Activated T-helper 1 cell treated with anti-CD3 and anti-CD28 coated beads, Interleukin-12 subunit alpha, Interleukin-12 subunit beta, Interleukin-2, Interleukin-4 antibody, amounts not matched to agents 30 ng/mL and 10 ng/mL and 1 ng/mL, durations not matched to agents 14 hours and 24 hours and 36 hours (primary cell): ENCODE measurements at regions of chr3 and their contacts with region 1.

Region 1: DNA sequence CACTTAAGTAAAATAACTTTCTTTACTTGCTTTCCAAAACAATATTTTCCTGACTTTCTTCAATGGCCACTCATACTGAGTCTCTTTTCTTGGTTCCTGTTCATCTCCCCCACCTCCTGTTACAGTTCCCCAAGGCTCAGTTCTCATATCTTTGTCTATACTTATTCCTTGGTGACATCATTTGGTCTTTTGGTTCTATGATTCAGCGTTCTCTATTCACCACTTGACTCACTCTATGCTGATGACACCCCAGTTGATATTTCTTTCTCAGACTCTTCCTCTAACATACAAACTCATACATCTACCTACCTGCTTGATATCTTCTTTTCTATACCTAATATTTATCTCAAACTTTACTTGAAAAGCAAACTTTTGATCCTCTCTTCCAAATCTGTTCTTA is 85.0 kb upstream of the P3H2 start:
- DNase-seq: no peak
- H3K4me3 Mint-ChIP-seq: no peak overlapping the region
- H3K27ac Mint-ChIP-seq: no peak overlapping the region
- H3K4me1 Mint-ChIP-seq: peaks cover 9% of the 10 kb centered on the region
- H3K27me3 Mint-ChIP-seq: peaks cover 6% of the 10 kb centered on the region

Region 2: DNA sequence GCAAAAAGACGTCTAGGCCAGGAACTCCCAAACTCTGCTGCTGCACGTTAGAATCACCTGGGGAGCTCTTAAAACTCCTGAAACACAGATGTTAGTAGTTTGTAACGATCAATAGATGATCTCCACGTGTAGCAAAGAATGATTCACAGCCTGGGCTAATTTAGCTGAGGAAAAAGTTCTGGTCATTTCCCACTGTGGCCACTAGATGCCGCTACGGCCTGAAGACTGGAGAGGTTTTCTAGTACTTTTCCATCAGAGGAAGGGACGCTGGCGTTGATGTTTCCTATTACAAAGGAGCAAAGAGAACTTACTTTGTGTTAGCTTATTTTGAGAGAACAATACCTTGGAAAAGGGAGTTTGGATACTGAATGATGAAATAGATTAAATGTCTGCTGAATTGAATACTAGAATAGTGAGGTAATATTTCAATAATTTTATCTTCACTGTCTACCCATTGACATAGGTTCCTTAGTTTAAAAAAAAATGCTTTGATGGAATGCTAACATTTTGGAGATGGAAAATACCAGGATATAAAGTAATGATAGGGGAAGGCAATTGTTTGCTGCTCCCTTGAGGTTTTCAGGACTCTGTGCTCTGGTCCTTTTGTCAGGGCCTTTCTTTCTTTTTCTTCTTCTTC is 244.1 kb before region 1 on chr3:
- intact Hi-C with region 1: loop called (anchors 1 kb)
- DNase-seq: peak; percentile 49
- H3K4me3 Mint-ChIP-seq: no peak overlapping the region
- H3K27ac Mint-ChIP-seq: no peak overlapping the region
- H3K4me1 Mint-ChIP-seq: peaks cover 7% of the 10 kb centered on the region
- H3K27me3 Mint-ChIP-seq: peaks cover 2% of the 10 kb centered on the region

Region 3: GRCh38 chr3:189967254-189967865 is 238.4 kb before region 1 on chr3:
- intact Hi-C with region 1: loop called (anchors 1 kb)
- DNase-seq: no peak
- H3K4me3 Mint-ChIP-seq: no peak overlapping the region
- H3K27ac Mint-ChIP-seq: no peak overlapping the region
- H3K4me1 Mint-ChIP-seq: peaks cover 8% of the 10 kb centered on the region
- H3K27me3 Mint-ChIP-seq: peaks cover 7% of the 10 kb centered on the region

Region 4: DNA sequence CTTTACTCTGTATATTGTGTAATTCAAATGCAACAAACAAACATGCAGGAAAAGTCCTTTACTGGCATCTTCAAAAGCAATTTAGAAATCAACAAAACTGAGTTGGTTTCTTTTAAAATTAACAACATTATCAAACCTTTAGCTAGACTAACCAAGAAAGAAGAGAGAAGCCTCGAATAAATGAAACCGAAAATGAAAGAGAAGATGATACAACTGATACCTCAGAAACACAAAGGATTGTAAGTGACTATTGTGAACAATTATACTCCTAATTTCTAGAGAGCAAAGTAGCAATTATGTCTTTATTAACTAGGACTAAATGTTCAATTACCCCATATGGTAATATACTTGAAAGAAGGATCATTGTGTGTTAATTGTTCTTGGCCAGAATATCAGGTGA is 35.9 kb before region 1 on chr3:
- intact Hi-C with region 1: loop called (anchors 2 kb)
- DNase-seq: no peak
- H3K4me3 Mint-ChIP-seq: peak overlapping the region; percentile 24
- H3K27ac Mint-ChIP-seq: no peak overlapping the region
- H3K4me1 Mint-ChIP-seq: peaks cover 11% of the 10 kb centered on the region
- H3K27me3 Mint-ChIP-seq: peaks cover 8% of the 10 kb centered on the region

Region 5: DNA sequence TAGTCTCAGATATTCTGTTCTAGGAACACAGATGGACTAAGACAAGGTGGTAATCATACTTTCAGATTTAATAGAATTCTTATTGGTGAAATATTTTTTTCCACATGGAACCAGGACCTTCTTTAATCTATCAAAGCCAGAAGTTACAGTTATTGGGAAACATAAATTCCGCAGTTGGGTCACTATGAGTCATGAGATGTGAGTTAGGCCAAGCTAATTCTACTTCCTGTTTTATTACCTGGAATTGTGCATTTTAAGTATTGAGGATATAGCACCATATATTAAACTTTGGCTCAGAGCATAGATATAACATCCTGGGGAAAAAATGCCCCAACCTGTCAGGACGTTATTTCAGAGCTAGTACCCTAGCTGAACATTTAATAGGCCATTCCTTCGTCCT is 11.3 kb after region 1 on chr3:
- intact Hi-C with region 1: no loop called
- DNase-seq: no peak
- H3K4me3 Mint-ChIP-seq: no peak overlapping the region
- H3K27ac Mint-ChIP-seq: no peak overlapping the region
- H3K4me1 Mint-ChIP-seq: no peaks in the 10 kb centered on the region
- H3K27me3 Mint-ChIP-seq: no peaks in the 10 kb centered on the region